A549 (cell line): ENCODE measurements at regions of chr3 and their contacts with region 1.

Region 1: GRCh38 chr3:194344012-194344411 is 7.1 kb downstream of the CPN2 start:
- DNase-seq: peak; percentile 53 to 86
- ATAC-seq: peak; percentile 77 to 90; a peak in 4 of 6 replicates
- H3K4me3 ChIP-seq: no peak overlapping the region
- H3K27ac ChIP-seq: no peak overlapping the region
- H3K4me1 ChIP-seq: no peaks in the 10 kb centered on the region
- CTCF ChIP-seq: peak; percentile 74
- EP300 ChIP-seq: no peak
- POLR2A ChIP-seq: no peak
- RAD21 ChIP-seq: peak; percentile 64

Region 2: DNA sequence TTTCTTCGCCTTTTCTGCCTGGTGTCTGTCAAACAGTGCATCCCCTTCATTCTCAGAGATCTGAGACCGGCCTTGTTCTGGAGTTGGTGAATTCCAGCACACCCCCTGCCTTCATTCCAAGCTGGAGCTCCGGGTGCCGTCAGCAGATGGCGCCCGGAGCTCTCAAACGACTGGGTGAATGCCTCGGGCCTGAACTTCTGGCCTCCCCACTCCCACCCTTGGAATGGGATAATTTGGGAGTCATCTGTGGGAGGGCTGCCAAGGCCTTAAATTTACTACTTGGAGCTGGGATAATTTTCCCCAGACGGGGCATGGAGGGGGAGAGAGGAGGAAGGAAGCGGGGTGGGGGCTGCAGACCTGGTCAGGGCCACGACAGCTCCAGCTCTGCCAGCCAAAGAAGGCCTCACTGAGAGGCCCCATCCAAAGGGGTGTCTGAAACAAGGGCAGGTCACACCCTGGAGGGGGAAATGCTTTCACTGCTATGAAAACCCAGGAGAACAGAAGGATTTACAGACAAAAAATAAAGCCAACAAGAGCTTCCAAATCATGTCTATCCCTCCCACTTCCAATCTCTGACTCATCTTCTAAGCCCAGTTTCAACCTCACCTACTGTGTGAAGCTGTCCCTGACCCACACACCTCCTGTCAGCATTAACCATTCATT is 563.1 kb before region 1 on chr3:
- CTCF ChIA-PET with region 1: interaction called, 16 read pairs
- POLR2A ChIA-PET with region 1: no interaction called
- DNase-seq: peak; percentile 64 to 88
- ATAC-seq: peak; percentile 89 to 94
- H3K4me3 ChIP-seq: no peak overlapping the region
- H3K27ac ChIP-seq: peak overlapping the region; percentile 69 to 82
- H3K4me1 ChIP-seq: peaks cover 44% of the 10 kb centered on the region
- CTCF ChIP-seq: peak; percentile 78
- EP300 ChIP-seq: no peak
- POLR2A ChIP-seq: no peak
- RAD21 ChIP-seq: peak; percentile 82 to 91

Region 3: GRCh38 chr3:194308601-194309449 is 35.2 kb before region 1 on chr3:
- CTCF ChIA-PET with region 1: no interaction called
- POLR2A ChIA-PET with region 1: no interaction called
- DNase-seq: no peak
- ATAC-seq: no peak
- H3K4me3 ChIP-seq: no peak overlapping the region
- H3K27ac ChIP-seq: peak overlapping the region in 1 of 2 experiments; percentile 39; a peak in 3 of 6 replicates
- H3K4me1 ChIP-seq: peaks cover 33% of the 10 kb centered on the region
- CTCF ChIP-seq: no peak
- EP300 ChIP-seq: no peak
- POLR2A ChIP-seq: no peak
- RAD21 ChIP-seq: no peak

Region 4: GRCh38 chr3:194333212-194333980 is 10.6 kb before region 1 on chr3:
- CTCF ChIA-PET with region 1: interaction called, 74 read pairs
- POLR2A ChIA-PET with region 1: interaction called, 3 read pairs
- DNase-seq: peak; percentile 47 to 82
- ATAC-seq: peak; percentile 87 to 97
- H3K4me3 ChIP-seq: peak overlapping the region; percentile 45
- H3K27ac ChIP-seq: peak overlapping the region; percentile 69 to 93
- H3K4me1 ChIP-seq: peaks cover 25% of the 10 kb centered on the region
- CTCF ChIP-seq: peak; percentile 86
- EP300 ChIP-seq: no peak
- POLR2A ChIP-seq: no peak; the same call in 1 of the 2 replicates
- RAD21 ChIP-seq: peak; percentile 90 to 95

Region 5: GRCh38 chr3:194357681-194358080 is 13.7 kb after region 1 on chr3:
- CTCF ChIA-PET with region 1: interaction called, 52 read pairs
- POLR2A ChIA-PET with region 1: no interaction called
- DNase-seq: no peak
- ATAC-seq: no peak
- H3K4me3 ChIP-seq: no peak overlapping the region
- H3K27ac ChIP-seq: no peak overlapping the region
- H3K4me1 ChIP-seq: no peaks in the 10 kb centered on the region
- CTCF ChIP-seq: no peak
- EP300 ChIP-seq: no peak
- POLR2A ChIP-seq: no peak
- RAD21 ChIP-seq: no peak

Region 6: DNA sequence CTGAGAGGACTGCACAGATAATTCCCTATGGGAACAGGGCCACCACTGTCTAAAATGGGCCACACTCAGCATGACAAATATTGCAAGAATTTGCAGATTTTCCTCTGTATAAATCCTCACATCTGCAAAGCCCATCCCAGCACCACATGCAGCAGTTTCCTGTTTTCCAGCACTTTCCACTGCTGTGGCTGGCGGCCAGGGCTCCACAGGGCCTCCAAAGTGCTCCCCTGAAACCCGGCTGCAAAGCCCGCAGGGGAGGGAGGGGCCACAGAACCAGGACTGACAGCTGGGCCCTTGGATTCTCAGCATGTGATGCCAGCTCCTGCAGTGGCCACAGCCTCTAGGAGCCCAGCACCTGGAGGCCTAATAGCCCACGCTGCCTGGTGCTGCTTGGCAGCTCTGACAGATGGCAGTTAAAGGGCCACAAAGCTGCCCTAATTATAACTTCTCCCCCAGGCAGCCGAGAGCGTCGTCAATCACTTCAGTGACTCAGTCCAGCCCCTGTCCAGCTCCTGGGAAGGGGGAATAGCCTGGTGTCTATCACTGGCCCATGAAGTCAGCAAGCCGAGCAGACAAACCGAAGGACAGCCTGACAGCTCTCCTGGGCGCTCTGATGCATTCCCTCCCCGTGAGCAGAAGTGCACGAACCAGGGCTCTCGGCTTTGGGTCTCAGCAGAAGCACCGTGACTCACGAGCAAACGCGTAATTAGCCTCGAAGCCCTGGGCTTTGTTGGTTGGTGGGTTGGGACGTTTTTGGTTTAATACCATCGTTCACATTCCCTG is 20.8 kb after region 1 on chr3:
- CTCF ChIA-PET with region 1: interaction called, 52 read pairs
- POLR2A ChIA-PET with region 1: no interaction called
- DNase-seq: no peak
- ATAC-seq: peak in 1 of 2 experiments; percentile 20; a peak in 1 of 6 replicates
- H3K4me3 ChIP-seq: no peak overlapping the region
- H3K27ac ChIP-seq: peak overlapping the region in 1 of 2 experiments; percentile 28; a peak in 1 of 6 replicates
- H3K4me1 ChIP-seq: peaks cover 6% of the 10 kb centered on the region; the same call in 1 of the 3 replicates
- CTCF ChIP-seq: no peak
- EP300 ChIP-seq: no peak
- POLR2A ChIP-seq: no peak
- RAD21 ChIP-seq: no peak

Region 7: DNA sequence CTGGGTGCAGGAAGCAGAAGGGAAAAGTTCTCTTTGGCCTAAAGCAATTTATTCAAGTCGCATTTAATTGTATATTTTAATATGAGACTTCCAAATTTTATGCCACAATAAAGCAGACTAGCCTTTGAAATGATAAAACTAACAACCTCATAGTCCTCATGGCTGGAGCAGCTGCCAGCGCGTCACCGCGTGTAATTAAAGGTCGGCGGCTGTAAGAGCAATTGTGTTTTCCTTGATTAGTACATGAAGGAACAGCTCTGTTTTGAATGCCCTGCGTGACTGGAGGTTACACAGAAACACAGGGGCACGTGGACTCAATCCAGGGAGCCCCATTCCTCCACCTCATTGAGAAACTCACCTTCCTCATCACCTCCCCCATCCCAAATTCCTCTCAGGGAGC is 35.6 kb after region 1 on chr3:
- CTCF ChIA-PET with region 1: interaction called, 12 read pairs
- POLR2A ChIA-PET with region 1: no interaction called
- DNase-seq: no peak
- ATAC-seq: no peak
- H3K4me3 ChIP-seq: no peak overlapping the region
- H3K27ac ChIP-seq: no peak overlapping the region
- H3K4me1 ChIP-seq: no peaks in the 10 kb centered on the region
- CTCF ChIP-seq: no peak
- EP300 ChIP-seq: no peak
- POLR2A ChIP-seq: no peak
- RAD21 ChIP-seq: no peak

Region 8: GRCh38 chr3:194404365-194405140 is 60.5 kb after region 1 on chr3:
- CTCF ChIA-PET with region 1: interaction called, 23 read pairs
- POLR2A ChIA-PET with region 1: no interaction called
- DNase-seq: peak in 1 of 2 experiments; percentile 56
- ATAC-seq: peak in 1 of 2 experiments; percentile 51; a peak in 1 of 6 replicates
- H3K4me3 ChIP-seq: no peak overlapping the region
- H3K27ac ChIP-seq: no peak overlapping the region
- H3K4me1 ChIP-seq: peaks cover 3% of the 10 kb centered on the region; the same call in 1 of the 3 replicates
- CTCF ChIP-seq: peak; percentile 74
- EP300 ChIP-seq: no peak
- POLR2A ChIP-seq: no peak
- RAD21 ChIP-seq: peak; percentile 59 to 62